Activated CD4-positive, alpha-beta T cell treated with anti-CD3 and anti-CD28 coated beads, Interleukin-2, amount 10 ng/mL, durations not matched to agents 24 days and 14 days (primary cell): ENCODE measurements at regions of chr18 and their contacts with region 1.

Region 1: GRCh38 chr18:62505669-62506494 is 16.9 kb upstream of the ZCCHC2 start:
- DNase-seq: peak; percentile 81
- H3K4me3 Mint-ChIP-seq: peak overlapping the region; percentile 79
- H3K27ac Mint-ChIP-seq: peak overlapping the region; percentile 98
- H3K4me1 Mint-ChIP-seq: peaks cover 23% of the 10 kb centered on the region
- H3K27me3 Mint-ChIP-seq: no peaks in the 10 kb centered on the region

Region 2: GRCh38 chr18:61926532-61926931 is 579.4 kb before region 1 on chr18:
- intact Hi-C with region 1: loop called (anchors 10 kb)
- DNase-seq: peak; percentile 78
- H3K4me3 Mint-ChIP-seq: no peak overlapping the region
- H3K27ac Mint-ChIP-seq: peak overlapping the region; percentile 81
- H3K4me1 Mint-ChIP-seq: peaks cover 25% of the 10 kb centered on the region
- H3K27me3 Mint-ChIP-seq: peaks cover 4% of the 10 kb centered on the region

Region 3: DNA sequence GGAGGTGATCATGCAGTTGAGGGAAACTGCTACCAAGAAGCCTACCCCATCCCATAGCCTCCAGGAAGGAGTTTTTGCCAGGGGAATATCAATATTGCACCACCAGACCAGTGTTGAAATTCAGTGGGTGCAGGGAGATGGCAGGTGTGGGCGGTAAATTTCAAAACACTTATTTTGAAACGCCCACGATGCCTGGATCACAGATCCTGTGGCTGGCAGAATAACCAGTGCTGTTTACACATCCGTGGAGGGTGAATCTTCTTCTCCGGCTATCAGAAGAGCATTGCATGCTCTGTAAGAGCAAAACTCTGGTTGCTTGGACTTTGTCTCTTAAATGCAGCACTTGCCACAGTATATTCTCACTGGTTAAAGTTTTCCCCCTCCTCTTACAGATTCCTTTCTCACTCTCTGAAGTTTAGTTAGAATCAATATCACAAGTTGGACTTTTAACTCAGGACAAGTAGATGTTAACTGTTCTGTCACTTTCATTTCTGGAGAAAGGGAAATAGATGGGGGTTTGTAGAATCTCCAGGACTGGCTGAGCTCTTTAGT is 53.5 kb before region 1 on chr18:
- intact Hi-C with region 1: loop called (anchors 1 kb)
- DNase-seq: peak; percentile 60
- H3K4me3 Mint-ChIP-seq: peak overlapping the region; percentile 67
- H3K27ac Mint-ChIP-seq: peak overlapping the region; percentile 78
- H3K4me1 Mint-ChIP-seq: peaks cover 23% of the 10 kb centered on the region
- H3K27me3 Mint-ChIP-seq: no peaks in the 10 kb centered on the region